Activated CD4-positive, alpha-beta memory T cell treated with anti-CD3 and anti-CD28 coated beads, Interleukin-2, amount 10 ng/mL, durations not matched to agents 7 days and 5 days (primary cell): ENCODE measurements at regions of chr13 and their contacts with region 1.

Region 1: DNA sequence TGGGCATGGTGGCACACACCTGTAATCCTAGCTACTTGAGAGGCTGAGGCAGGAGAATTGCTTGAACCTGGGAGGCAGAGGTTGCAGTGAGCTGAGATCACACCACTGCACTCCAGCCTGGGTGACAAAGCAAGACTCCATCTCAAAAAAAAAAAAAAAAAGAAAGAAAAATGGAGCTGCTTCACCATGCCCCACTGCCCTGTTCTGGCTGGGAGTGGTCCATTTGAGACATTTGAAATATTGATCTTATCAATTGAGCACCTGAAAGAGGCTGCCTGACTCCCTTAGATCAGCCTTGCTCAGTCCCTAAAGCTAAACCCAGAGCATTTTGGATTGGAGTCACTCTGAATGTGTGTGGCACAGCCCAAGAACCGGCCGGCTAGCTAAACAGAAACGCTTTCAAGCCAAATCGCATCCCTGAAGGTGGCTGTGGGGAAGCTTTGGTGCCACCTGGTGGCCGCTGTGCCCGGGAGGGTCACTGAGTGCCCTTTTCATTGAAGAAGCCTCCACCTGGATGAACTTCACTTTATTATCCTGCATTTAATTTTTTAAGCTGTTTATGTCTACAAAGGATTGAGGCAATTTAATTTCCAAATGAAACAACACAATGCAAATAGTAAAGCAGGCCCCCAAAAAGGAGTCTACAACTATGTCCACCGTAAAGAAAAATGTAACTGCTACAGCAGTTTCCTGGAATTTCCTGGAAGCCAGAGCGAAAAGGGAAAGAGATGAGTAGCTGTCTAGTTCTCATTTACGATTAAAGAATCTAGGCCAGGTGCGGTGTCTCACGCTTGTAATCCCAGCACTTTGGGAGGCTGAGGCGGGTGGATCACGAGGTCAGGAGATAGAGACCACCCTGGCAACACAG is 53.1 kb upstream of the SERPINE3 start:
- DNase-seq: peak; percentile 79
- H3K4me3 Mint-ChIP-seq: no peak overlapping the region
- H3K27ac Mint-ChIP-seq: no peak overlapping the region
- H3K4me1 Mint-ChIP-seq: peaks cover 16% of the 10 kb centered on the region
- H3K27me3 Mint-ChIP-seq: peaks cover 8% of the 10 kb centered on the region

Region 2: DNA sequence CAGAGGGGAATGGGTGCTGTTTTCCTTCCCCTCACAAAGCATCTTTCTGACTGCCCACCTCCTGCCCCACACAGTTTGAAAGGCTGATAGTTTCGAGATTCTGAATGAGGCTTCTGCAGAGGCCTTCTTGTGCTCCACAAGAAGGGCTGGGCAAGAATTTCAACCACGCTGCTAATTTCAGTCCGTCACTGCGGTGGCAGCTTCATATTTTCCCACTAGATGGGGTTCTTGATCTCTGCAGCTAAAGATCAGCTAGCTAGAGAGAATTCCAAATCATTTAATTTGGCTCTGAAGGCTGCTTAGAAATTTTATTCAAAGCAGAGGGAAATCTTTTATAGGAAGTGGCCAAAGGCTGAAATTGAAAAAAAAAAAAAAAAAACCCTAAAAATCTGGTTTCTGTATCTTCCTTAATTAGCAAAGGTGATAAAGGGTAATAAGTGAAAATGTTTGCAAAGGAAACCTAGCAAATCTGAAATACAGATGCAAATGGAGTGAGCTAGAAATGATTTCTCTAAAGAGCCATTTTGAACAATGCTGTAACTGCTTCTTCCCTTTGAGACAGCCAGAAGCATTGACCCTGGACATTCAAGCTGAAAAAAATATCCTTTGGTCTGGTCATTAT is 137.3 kb before region 1 on chr13:
- CTCF ChIA-PET with region 1: interaction called, 13 read pairs
- POLR2A ChIA-PET with region 1: no interaction called
- DNase-seq: no peak
- H3K4me3 Mint-ChIP-seq: no peak overlapping the region
- H3K27ac Mint-ChIP-seq: no peak overlapping the region
- H3K4me1 Mint-ChIP-seq: peaks cover 4% of the 10 kb centered on the region
- H3K27me3 Mint-ChIP-seq: peaks cover 24% of the 10 kb centered on the region

Region 3: DNA sequence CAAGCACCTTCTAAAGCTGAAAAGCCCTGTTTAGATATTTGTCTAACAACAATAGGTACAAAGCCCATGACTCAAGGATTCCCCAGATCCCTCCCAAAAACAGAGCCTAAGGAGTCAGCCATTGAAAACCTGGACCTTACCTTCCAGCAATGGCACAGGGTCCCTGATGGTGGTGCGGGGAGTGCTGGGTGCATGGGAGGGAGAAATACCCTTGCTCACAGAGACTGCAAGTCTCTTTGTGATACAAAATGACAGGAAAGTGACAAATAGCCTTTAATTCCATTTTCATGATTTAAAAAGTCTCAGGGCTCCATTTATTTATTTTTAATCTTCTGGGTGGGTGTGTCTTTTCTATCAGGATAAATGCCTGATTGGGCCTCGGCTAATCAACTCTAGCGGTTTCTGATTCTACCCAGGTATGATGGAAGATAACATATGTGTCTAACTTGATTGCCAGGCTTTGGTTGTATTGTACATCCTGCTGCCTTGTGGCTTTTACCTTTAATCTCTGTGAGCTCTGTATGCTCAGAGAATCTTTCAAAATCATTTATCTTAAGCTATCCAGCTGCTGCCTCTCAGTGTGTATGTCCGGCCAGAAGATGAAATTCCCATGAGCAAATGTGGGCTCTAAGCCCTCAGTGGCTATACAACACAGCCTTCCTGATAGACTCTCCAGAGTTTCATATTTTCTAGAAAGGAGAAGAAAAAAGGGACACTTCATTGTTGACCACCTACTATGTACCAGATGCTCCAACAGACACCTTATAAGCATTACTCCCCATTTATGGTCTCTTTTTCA is 118.8 kb before region 1 on chr13:
- CTCF ChIA-PET with region 1: no interaction called
- POLR2A ChIA-PET with region 1: no interaction called
- DNase-seq: no peak
- H3K4me3 Mint-ChIP-seq: no peak overlapping the region
- H3K27ac Mint-ChIP-seq: no peak overlapping the region
- H3K4me1 Mint-ChIP-seq: no peaks in the 10 kb centered on the region
- H3K27me3 Mint-ChIP-seq: peaks cover 29% of the 10 kb centered on the region

Region 4: DNA sequence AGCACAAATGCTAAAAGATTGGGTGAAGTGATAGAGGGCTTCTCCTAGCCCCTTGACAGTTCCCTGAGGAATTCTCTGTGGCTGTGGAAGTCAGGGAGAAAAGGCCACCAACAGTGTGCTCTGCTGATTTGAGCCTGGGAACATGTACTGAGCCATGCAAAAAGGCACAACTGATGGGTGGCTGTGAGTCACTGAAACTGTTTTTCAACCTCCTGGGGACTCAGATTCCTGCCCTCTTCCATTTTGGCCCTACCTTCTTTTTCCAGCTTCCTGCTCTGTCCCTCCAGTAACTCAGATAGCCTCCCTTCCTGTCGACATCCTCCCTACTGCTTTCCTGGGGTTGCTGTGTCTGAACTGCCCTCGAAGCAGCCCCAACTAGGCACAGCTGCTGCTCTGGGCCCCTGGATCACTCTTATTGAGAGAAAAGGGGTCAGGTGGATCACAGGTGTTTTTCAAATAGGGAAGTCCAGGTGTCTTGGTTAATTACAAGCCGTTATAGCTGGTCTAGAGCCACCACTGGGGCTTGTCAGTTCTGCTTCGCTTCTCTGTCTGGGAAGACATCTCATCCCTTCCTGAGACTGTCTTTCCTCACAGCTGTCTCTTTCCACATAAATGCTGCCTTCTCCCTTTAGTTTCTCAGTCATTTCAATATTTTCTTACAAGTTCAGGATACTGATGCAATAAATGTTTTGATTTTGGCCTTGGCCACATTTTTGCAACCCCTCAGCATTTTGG is 50.4 kb before region 1 on chr13:
- CTCF ChIA-PET with region 1: interaction called, 13 read pairs
- POLR2A ChIA-PET with region 1: no interaction called
- DNase-seq: no peak
- H3K4me3 Mint-ChIP-seq: no peak overlapping the region
- H3K27ac Mint-ChIP-seq: no peak overlapping the region
- H3K4me1 Mint-ChIP-seq: peaks cover 1% of the 10 kb centered on the region
- H3K27me3 Mint-ChIP-seq: peaks cover 35% of the 10 kb centered on the region

Region 5: GRCh38 chr13:51262501-51263211 is 23.7 kb before region 1 on chr13:
- CTCF ChIA-PET with region 1: interaction called, 18 read pairs
- POLR2A ChIA-PET with region 1: no interaction called
- DNase-seq: no peak
- H3K4me3 Mint-ChIP-seq: no peak overlapping the region
- H3K27ac Mint-ChIP-seq: no peak overlapping the region
- H3K4me1 Mint-ChIP-seq: no peaks in the 10 kb centered on the region
- H3K27me3 Mint-ChIP-seq: no peaks in the 10 kb centered on the region

Region 6: DNA sequence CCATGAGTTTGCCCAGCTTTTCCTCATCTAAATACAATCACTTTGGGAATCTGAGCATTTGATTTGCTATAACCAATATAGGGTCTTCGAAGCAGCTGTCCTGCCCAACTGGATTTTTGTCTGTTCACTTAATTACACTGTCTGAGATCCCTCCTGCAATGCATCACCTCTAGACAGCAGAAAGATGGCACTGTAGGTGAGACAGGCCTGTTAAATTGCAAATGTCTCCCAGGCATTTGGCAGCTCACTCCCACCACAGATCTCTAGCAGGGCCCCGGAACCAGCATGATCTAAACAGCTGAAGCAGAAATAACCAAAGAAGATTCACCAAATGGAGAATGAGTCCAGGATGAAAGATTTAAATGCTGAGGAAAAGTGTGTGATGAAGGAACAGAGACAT is 11.2 kb after region 1 on chr13:
- CTCF ChIA-PET with region 1: interaction called, 37 read pairs
- POLR2A ChIA-PET with region 1: interaction called, 3 read pairs
- DNase-seq: no peak
- H3K4me3 Mint-ChIP-seq: no peak overlapping the region
- H3K27ac Mint-ChIP-seq: no peak overlapping the region
- H3K4me1 Mint-ChIP-seq: no peaks in the 10 kb centered on the region
- H3K27me3 Mint-ChIP-seq: peaks cover 3% of the 10 kb centered on the region

Region 7: DNA sequence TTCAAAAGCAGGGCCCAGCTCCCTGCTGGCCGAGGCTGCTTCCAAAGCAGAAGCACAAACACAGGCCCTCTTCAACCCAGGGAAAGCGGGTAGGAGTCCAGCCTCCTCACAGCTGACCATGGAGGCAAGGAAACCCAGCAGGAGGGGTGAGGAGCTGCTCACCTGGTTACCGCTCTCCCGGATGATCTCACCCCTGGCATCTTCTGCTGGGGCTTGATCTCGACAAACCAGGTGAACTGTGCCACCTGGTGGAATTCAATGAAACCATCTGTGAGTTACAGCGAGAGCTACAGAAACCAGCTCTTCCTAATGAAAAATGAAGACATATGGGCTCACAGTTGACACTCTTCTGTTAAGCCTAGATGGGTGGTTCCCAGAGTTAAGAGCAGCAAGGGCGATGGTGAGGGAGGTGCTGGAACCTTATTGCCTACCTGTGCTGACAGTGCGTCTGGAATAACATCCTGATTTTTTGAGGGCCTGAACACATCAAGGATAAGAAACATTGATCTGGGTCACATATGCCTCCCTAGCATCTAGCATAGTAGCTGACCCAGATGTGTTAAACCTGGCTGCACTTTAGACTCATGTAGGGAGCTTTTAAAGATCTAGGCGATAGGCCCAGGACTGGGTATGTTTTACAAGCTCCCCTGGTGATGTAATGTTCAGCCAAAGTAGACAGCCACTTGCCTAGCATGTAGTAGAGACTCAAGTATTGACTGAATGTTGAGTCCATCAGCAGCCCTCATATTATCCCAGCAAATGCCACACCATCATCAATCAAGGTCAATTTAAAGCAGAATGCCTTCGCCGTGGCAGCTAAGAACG is 511.5 kb after region 1 on chr13:
- CTCF ChIA-PET with region 1: interaction called, 62 read pairs
- POLR2A ChIA-PET with region 1: no interaction called
- DNase-seq: peak; percentile 68
- H3K4me3 Mint-ChIP-seq: no peak overlapping the region
- H3K27ac Mint-ChIP-seq: no peak overlapping the region
- H3K4me1 Mint-ChIP-seq: peaks cover 39% of the 10 kb centered on the region
- H3K27me3 Mint-ChIP-seq: no peaks in the 10 kb centered on the region